ENCODE measurements at regions of chr10 and their contacts with region 1.

Region 1: GRCh38 chr10:101367569-101368453 is 13.8 kb downstream of the BTRC start:
- DNase-seq: peak; percentile 91
- H3K4me3 Mint-ChIP-seq: peak overlapping the region; percentile 63
- H3K27ac Mint-ChIP-seq: peak overlapping the region; percentile 86
- H3K4me1 Mint-ChIP-seq: peaks cover 19% of the 10 kb centered on the region
- H3K27me3 Mint-ChIP-seq: no peaks in the 10 kb centered on the region
- CTCF ChIP-seq: no peak

Region 2: DNA sequence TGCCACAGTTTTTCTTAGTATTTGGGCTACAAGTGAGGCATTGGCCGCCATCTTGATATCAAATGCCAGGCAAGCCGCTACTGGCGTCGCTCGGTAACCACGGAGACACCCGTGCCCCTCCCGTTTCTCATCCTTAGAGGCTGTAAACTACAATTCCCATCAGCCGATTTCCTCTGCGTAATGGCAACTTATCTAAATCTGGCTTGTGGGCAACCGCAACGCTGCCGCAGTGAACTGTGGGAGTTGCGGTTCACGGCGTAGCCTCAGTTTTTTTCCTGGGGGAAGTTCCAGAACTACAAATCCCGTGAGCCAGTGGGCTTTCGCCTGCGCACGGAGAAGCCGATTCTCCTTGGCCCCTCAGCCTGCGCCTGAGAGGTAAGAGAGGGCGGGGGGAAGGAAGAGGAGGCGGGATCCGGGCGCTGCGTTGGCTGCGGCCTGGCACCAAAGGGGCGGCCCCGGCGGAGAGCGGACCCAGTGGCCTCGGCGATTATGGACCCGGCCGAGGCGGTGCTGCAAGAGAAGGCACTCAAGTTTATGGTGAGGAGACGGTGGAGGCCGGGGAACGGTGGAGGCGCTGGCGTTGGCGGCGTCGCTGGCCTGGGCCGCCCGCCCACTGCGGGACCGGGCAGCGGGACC is 14.0 kb before region 1 on chr10 and contains the start of gene BTRC:
- CTCF ChIA-PET with region 1: interaction called, 3 read pairs
- POLR2A ChIA-PET with region 1: interaction called, 64 read pairs
- intact Hi-C with region 1: no loop called
- DNase-seq: peak; percentile 99
- H3K4me3 Mint-ChIP-seq: peak within 1 kb of the TSS; percentile 86
- H3K27ac Mint-ChIP-seq: peak within 1 kb of the TSS; percentile 91
- H3K4me1 Mint-ChIP-seq: peaks cover 20% of the 10 kb centered on the region
- H3K27me3 Mint-ChIP-seq: peaks cover 14% of the 10 kb centered on the region
- CTCF ChIP-seq: no peak
- total RNA-seq, gene BTRC: 19.4 and 25.2 TPM in 2 replicates

Region 3: DNA sequence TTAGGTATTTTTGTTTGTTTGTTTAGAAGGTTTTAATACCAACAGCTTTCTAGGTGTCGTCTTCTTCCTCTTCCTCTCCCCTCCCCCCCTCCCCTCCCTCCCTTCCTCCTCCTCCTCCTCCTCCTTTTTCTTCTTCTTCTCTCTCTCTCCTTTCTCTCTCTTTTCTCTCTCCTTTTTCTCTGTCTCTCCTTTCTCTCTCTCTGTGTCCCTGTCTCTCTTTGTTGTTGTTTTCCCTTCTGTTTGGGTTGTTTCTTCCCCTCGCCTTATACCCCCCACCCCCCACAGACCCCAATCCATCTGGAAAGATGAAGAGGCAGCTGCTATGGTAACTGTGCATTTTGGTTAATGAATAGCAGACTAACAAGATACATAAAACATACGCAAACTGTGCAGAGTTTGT is 61.6 kb after region 1 on chr10:
- CTCF ChIA-PET with region 1: no interaction called
- POLR2A ChIA-PET with region 1: no interaction called
- intact Hi-C with region 1: no loop called
- DNase-seq: no peak
- H3K4me3 Mint-ChIP-seq: no peak overlapping the region
- H3K27ac Mint-ChIP-seq: no peak overlapping the region
- H3K4me1 Mint-ChIP-seq: no peaks in the 10 kb centered on the region
- H3K27me3 Mint-ChIP-seq: no peaks in the 10 kb centered on the region
- CTCF ChIP-seq: no peak